ENCODE measurements at regions of chr14 and their contacts with region 1.

Region 1: GRCh38 chr14:75654127-75654732 is 6.4 kb downstream of the ERG28 start:
- DNase-seq: peak; percentile 88
- H3K4me3 ChIP-seq: no peak overlapping the region
- H3K27ac ChIP-seq: no peak overlapping the region
- H3K4me1 ChIP-seq: peaks cover 8% of the 10 kb centered on the region
- H3K27me3 ChIP-seq: no peaks in the 10 kb centered on the region
- CTCF ChIP-seq: peak; percentile 93 to 98 (median 95)
- POLR2A ChIP-seq: no peak

Region 2: DNA sequence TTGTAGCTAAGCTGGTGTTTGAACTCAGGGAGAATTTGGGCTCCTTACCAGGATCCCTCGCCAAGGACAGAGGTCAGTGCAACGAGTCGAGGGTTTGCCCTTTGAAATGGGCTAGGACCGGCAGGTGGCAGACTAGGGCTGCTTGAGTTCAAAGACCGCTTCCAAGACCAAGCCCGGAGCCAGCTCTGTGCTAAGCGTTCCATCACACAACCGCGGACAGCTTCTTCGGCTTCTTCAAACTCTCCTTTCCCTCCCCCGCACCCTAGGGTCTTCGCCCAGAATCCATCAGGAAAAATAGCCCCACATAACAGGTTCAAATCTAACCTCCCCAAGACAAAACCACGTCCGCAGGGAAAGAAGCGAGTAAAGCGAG is 76.5 kb before region 1 on chr14:
- intact Hi-C with region 1: loop called (anchors 5 kb)
- DNase-seq: peak; percentile 96
- H3K4me3 ChIP-seq: peak overlapping the region; percentile 64 to 69
- H3K27ac ChIP-seq: peak overlapping the region; percentile 68 to 81
- H3K4me1 ChIP-seq: peaks cover 13% of the 10 kb centered on the region
- H3K27me3 ChIP-seq: no peaks in the 10 kb centered on the region
- CTCF ChIP-seq: peak; percentile 67 to 71 (median 70)
- POLR2A ChIP-seq: no peak

Region 3: DNA sequence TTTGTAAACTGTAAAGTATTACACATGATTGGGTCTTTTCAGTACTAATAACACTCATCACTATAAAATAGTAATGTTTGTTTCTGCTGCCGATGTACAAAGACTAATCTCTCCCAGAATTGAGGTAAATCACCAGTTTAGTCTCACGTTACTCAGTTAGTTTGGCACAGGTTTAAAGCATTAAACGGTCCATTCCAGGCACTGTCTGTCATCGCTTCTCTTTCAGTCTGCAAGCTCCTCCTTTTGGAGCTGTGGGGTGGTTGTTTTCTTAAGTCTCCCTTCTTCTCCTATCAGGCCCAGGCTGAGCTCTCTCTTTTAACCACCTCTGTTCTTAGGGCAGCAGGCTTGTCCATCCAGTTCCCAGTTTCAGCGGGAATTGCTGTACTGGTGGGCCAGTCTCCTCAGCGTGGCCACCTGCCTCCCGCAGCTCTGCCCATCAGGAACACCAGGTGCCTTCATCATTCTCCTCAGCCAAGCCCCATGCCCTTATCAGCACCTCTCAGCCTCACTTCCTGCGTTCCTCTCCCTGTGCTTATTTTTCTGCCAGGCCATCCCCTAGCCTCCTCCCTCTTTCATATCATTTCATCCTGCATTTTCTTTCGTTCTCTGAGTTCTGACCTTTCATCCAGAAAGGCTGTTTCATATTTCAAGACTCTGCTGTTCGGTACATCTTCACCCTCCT is 178.5 kb after region 1 on chr14:
- intact Hi-C with region 1: no loop called
- DNase-seq: no peak
- H3K4me3 ChIP-seq: no peak overlapping the region
- H3K27ac ChIP-seq: peak overlapping the region in 1 of 2 donors; percentile 34
- H3K4me1 ChIP-seq: peaks cover 8% of the 10 kb centered on the region
- H3K27me3 ChIP-seq: no peaks in the 10 kb centered on the region
- CTCF ChIP-seq: no peak
- POLR2A ChIP-seq: no peak